Calu3 (cell line): ENCODE measurements at regions of chr3 and their contacts with region 1.

Region 1: GRCh38 chr3:141231101-141231935 is at the start of gene PXYLP1:
- DNase-seq: peak; percentile 99
- H3K4me3 Mint-ChIP-seq: peak within 1 kb of the TSS; percentile 82
- H3K27ac Mint-ChIP-seq: peak within 1 kb of the TSS; percentile 32
- H3K4me1 Mint-ChIP-seq: peaks cover 36% of the 10 kb centered on the region
- H3K27me3 Mint-ChIP-seq: peaks cover 32% of the 10 kb centered on the region
- CTCF ChIP-seq: peak; percentile 76
- total RNA-seq, gene PXYLP1: 13.1 and 16.3 TPM in 2 replicates

Region 2: DNA sequence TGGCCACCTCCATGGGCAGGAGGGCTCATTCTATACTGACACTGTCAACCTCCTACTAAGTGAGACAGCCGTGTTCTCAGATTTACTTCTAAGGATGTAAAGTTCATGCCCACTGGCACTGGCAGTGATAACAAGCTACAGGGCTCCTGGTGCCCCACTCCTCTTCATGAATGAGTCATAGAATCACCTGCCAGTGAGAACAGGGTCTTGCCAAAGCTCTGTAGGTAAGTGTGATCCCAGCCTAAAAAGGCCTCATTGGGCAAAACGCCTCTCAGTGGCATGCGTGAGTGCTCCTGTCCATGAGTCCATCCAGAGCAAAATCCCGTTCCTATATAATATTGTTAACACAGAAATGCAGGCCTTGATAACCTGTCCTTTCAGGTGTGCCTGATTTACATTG is 17.7 kb after region 1 on chr3:
- CTCF ChIA-PET with region 1: interaction called, 12 read pairs
- intact Hi-C with region 1: no loop called
- DNase-seq: no peak
- H3K4me3 Mint-ChIP-seq: no peak overlapping the region
- H3K27ac Mint-ChIP-seq: no peak overlapping the region
- H3K4me1 Mint-ChIP-seq: no peaks in the 10 kb centered on the region
- H3K27me3 Mint-ChIP-seq: no peaks in the 10 kb centered on the region
- CTCF ChIP-seq: no peak

Region 3: DNA sequence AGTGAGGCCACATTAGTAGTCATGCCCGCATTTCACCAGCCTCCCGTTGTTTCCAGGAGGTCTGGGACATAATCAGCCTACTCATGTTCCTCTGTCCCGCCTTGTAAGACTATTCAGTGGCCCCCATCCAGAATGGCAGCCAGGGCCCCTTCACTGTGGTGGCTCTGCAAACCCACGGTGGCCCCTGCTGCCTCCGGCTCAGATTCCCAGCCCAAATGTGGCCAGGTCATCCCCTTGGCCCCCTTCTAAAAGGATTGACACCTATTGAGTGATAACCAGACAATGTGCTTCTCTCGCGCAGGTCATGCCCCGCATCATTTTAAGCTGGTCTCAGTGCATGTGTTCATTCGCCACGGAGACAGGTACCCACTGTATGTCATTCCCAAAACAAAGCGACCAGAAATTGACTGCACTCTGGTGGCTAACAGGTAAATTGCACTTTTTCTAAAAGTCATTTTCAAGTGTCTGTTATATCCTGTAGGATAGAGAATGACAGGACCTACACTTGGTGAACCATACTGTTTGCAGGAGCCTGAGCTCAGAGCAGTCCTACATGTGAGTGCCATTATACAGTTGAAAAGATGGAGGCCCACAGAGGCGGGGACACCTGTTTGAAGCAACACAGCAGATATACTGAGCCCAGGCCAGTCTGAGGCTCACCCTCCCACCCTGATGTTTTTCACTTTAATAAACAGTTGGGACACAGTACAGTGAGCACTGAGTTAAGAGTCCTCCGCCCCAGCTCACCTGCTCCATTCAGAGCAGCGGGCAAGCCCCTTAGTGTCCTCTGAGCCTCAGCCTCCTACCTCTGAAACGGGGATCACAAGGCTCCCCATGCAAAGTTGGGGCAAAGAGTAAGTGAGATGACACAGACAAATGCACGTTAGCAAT is 48.0 kb after region 1 on chr3:
- CTCF ChIA-PET with region 1: interaction called, 4 read pairs
- intact Hi-C with region 1: loop called (anchors 1 kb)
- DNase-seq: no peak
- H3K4me3 Mint-ChIP-seq: no peak overlapping the region
- H3K27ac Mint-ChIP-seq: no peak overlapping the region
- H3K4me1 Mint-ChIP-seq: no peaks in the 10 kb centered on the region
- H3K27me3 Mint-ChIP-seq: no peaks in the 10 kb centered on the region
- CTCF ChIP-seq: peak; percentile 73

Region 4: GRCh38 chr3:141452036-141452435 is 220.7 kb after region 1 on chr3:
- CTCF ChIA-PET with region 1: interaction called, 12 read pairs
- intact Hi-C with region 1: no loop called
- DNase-seq: peak; percentile 56
- H3K4me3 Mint-ChIP-seq: no peak overlapping the region
- H3K27ac Mint-ChIP-seq: no peak overlapping the region
- H3K4me1 Mint-ChIP-seq: peaks cover 29% of the 10 kb centered on the region
- H3K27me3 Mint-ChIP-seq: no peaks in the 10 kb centered on the region
- CTCF ChIP-seq: no peak

Region 5: DNA sequence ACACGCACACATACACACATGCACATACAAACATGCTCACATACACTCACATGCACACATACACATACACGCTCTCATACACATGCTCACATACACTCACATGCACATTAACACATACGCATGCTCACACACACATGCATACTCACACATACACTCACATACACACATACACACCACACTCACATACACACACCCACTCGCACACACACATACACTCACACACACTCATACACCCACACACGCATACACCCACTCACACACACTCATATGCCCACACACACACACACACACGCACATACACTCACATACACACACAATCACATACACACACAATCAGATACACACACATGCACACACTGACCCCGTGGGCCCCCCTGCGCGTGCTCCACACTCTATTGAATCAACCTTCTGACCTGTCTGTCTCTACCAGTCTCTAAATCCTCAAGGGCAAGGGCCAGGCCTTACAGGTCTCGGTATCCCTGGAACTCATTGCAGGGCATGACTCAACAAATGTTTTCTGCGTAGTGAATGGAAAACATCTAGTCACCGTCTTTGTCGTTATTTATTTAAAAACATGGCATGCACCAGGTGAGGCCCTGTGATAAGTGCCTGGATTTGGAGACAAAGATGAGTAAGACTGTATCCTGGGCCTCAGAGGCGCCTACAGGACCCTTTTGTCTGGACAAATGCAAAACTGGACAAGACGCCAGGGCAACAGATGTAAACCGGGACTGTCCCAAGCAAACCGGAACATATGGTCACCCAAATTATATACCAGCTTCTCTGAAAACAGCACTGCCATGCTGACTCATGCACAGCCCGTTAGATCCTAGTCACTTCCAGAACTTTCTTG is 573.7 kb after region 1 on chr3:
- CTCF ChIA-PET with region 1: no interaction called
- intact Hi-C with region 1: no loop called
- DNase-seq: no peak
- H3K4me3 Mint-ChIP-seq: no peak overlapping the region
- H3K27ac Mint-ChIP-seq: no peak overlapping the region
- H3K4me1 Mint-ChIP-seq: no peaks in the 10 kb centered on the region
- H3K27me3 Mint-ChIP-seq: no peaks in the 10 kb centered on the region
- CTCF ChIP-seq: no peak